HCT116 (cell line): ENCODE measurements at regions of chr17 and their contacts with region 1.

Region 1: DNA sequence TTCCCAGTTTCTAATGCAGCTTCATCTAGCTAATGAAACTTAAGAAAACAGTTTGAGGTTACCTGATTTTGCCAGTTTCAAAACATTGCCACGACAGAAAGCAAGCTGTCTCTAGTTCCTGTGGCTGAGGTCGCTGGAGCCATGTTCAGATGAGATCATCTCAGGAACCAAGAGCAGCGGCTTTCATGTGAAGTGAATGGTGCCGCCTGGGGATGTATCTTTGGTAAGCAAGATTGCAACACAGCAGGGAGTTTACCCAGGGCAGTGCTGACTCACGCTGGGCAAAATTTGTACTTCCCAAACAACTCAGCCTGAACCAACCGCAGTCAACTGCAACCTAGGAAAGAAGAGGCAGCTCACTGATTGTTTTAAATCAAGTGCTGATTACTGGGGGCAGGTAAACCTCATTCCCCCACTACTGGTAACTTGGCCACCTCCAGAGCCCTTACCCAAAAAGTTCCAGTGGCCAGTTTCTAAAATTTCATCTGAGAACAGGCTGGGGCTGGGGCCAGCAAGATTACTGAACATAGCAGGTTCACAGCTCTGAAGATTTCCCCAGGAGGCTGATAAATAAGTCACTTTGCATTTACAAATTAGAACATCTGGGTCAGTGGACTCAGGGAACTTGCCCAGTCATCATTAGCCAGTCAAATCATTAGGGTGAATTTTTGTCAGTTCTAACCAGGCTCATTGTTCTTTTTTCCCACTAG is at the start of gene RFFL:
- DNase-seq: peak; percentile 91
- ATAC-seq: peak; percentile 97
- H3K4me3 ChIP-seq: peak within 1 kb of the TSS in 1 of 2 experiments; percentile 32; a peak in 2 of 4 replicates
- H3K27ac ChIP-seq: peak within 1 kb of the TSS; percentile 92
- H3K4me1 ChIP-seq: peaks cover 31 to 47% of the 10 kb centered on the region in 2 experiments
- H3K27me3 ChIP-seq: no peaks in the 10 kb centered on the region
- CTCF ChIP-seq: no peak
- POLR2A ChIP-seq: no peak
- RAD21 ChIP-seq: peak; percentile 50
- total RNA-seq, gene RFFL: 40.3 TPM

Region 2: GRCh38 chr17:35082073-35082657 is 18.5 kb after region 1 on chr17:
- CTCF ChIA-PET with region 1: interaction called, 3 read pairs
- POLR2A ChIA-PET with region 1: interaction called, 17 read pairs
- RAD21 ChIA-PET with region 1: no interaction called
- intact Hi-C with region 1: no loop called
- DNase-seq: peak; percentile 81
- ATAC-seq: peak; percentile 31
- H3K4me3 ChIP-seq: peak overlapping the region in 1 of 2 experiments; percentile 31; a peak in 2 of 4 replicates
- H3K27ac ChIP-seq: peak overlapping the region; percentile 89; the same call in 1 of the 2 replicates
- H3K4me1 ChIP-seq: peaks cover 61 to 80% of the 10 kb centered on the region in 2 experiments
- H3K27me3 ChIP-seq: no peaks in the 10 kb centered on the region
- CTCF ChIP-seq: no peak
- POLR2A ChIP-seq: no peak
- RAD21 ChIP-seq: no peak